AG04449 (cell line): ENCODE measurements at regions of chr5 and their contacts with region 1.

Region 1: GRCh38 chr5:150700594-150701293 is at the start of gene RBM22:
- DNase-seq: peak; percentile 26
- H3K4me3 ChIP-seq: peak within 1 kb of the TSS; percentile 96
- CTCF ChIP-seq: peak; percentile 77

Region 2: GRCh38 chr5:150590979-150591561 is 109.7 kb before region 1 on chr5:
- CTCF ChIA-PET with region 1: no interaction called
- POLR2A ChIA-PET with region 1: no interaction called
- DNase-seq: no peak
- H3K4me3 ChIP-seq: no peak overlapping the region
- CTCF ChIP-seq: no peak

Region 3: GRCh38 chr5:150656191-150657132 is 44.3 kb before region 1 on chr5:
- CTCF ChIA-PET with region 1: interaction called, 11 read pairs
- POLR2A ChIA-PET with region 1: interaction called, 4 read pairs
- DNase-seq: no peak
- H3K4me3 ChIP-seq: peak overlapping the region; percentile 59
- CTCF ChIP-seq: peak; percentile 78

Region 4: GRCh38 chr5:150689120-150689519 is 11.6 kb before region 1 on chr5:
- CTCF ChIA-PET with region 1: interaction called, 13 read pairs
- POLR2A ChIA-PET with region 1: interaction called, 4 read pairs
- DNase-seq: no peak
- H3K4me3 ChIP-seq: no peak overlapping the region
- CTCF ChIP-seq: no peak

Region 5: GRCh38 chr5:150723845-150724244 is 23.1 kb after region 1 on chr5:
- CTCF ChIA-PET with region 1: interaction called, 11 read pairs
- POLR2A ChIA-PET with region 1: no interaction called
- DNase-seq: no peak
- H3K4me3 ChIP-seq: no peak overlapping the region
- CTCF ChIP-seq: no peak

Region 6: GRCh38 chr5:150758531-150759333 is 58.0 kb after region 1 on chr5 and contains the start of gene DCTN4:
- CTCF ChIA-PET with region 1: interaction called, 23 read pairs
- POLR2A ChIA-PET with region 1: interaction called, 9 read pairs
- DNase-seq: peak; percentile 98
- H3K4me3 ChIP-seq: peak within 1 kb of the TSS; percentile 84
- CTCF ChIP-seq: no peak